Mammary epithelial cell (primary cell): ENCODE measurements at regions of chr2 and their contacts with region 1.

Region 1: GRCh38 chr2:198374375-198375082 is 570.1 kb downstream of the PLCL1 start:
- DNase-seq: peak; percentile 42
- H3K4me3 ChIP-seq: no peak overlapping the region
- H3K27ac ChIP-seq: no peak overlapping the region
- H3K4me1 ChIP-seq: peaks cover 3% of the 10 kb centered on the region
- H3K27me3 ChIP-seq: no peaks in the 10 kb centered on the region
- CTCF ChIP-seq: peak; percentile 92 to 96

Region 2: DNA sequence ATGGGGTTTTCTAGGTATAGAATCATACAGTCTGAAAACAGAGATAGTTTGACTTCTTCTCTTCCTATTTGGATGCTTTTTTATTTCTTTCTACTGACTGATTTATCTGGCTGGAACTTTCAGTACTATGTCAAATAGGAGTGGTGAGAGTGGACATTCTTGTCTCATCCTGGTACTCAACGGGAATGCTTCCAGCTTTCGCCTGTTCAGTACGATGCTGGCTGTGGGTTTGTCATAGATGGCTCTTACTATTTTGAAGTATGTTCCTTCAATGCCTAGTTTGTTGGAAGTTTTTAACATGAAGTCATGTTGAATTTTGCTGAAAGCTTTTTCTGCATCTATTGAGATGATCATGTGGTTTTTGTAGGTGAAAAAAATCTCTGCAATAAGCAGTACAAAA is 160.2 kb after region 1 on chr2:
- CTCF ChIA-PET with region 1: no interaction called
- dilution Hi-C with region 1: no loop called
- in situ Hi-C with region 1: no loop called
- intact Hi-C with region 1: no loop called
- DNase-seq: no peak
- H3K4me3 ChIP-seq: no peak overlapping the region
- H3K27ac ChIP-seq: no peak overlapping the region
- H3K4me1 ChIP-seq: no peaks in the 10 kb centered on the region
- H3K27me3 ChIP-seq: no peaks in the 10 kb centered on the region
- CTCF ChIP-seq: no peak

Region 3: DNA sequence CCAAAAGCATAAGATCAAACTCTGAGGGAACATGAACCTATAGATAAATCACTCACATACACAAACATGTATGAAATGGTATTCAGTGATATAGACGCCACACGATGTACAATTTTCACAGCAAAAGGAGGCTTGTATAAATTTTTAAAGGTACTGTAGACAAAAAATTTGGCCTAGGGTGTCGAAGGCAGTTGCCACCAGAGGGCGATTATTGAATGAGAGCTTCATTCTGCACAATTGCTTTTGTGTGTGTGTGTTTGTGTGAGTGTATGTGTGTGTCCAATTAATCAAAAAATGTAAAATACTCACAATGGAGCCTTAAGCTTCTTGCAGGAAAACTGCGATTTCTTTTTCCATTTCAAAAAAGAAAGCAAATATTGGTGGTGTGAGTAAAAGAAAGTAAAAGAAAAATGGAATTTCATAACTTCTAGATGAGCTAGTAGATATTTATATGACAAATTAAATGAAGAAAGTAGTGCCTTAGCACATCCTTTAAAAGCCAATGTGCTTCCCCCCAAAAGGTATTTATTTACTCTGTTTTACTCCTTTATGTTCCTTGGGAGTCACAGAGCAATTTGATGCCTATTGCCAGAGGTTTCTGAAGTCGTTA is 283.1 kb after region 1 on chr2:
- CTCF ChIA-PET with region 1: no interaction called
- dilution Hi-C with region 1: no loop called
- in situ Hi-C with region 1: no loop called
- intact Hi-C with region 1: loop called (anchors 1 kb)
- DNase-seq: peak; percentile 8
- H3K4me3 ChIP-seq: no peak overlapping the region
- H3K27ac ChIP-seq: no peak overlapping the region
- H3K4me1 ChIP-seq: no peaks in the 10 kb centered on the region
- H3K27me3 ChIP-seq: peaks cover 4% of the 10 kb centered on the region
- CTCF ChIP-seq: peak; percentile 37 to 61